A673 (cell line): ENCODE measurements at regions of chr9 and their contacts with region 1.

Region 1: DNA sequence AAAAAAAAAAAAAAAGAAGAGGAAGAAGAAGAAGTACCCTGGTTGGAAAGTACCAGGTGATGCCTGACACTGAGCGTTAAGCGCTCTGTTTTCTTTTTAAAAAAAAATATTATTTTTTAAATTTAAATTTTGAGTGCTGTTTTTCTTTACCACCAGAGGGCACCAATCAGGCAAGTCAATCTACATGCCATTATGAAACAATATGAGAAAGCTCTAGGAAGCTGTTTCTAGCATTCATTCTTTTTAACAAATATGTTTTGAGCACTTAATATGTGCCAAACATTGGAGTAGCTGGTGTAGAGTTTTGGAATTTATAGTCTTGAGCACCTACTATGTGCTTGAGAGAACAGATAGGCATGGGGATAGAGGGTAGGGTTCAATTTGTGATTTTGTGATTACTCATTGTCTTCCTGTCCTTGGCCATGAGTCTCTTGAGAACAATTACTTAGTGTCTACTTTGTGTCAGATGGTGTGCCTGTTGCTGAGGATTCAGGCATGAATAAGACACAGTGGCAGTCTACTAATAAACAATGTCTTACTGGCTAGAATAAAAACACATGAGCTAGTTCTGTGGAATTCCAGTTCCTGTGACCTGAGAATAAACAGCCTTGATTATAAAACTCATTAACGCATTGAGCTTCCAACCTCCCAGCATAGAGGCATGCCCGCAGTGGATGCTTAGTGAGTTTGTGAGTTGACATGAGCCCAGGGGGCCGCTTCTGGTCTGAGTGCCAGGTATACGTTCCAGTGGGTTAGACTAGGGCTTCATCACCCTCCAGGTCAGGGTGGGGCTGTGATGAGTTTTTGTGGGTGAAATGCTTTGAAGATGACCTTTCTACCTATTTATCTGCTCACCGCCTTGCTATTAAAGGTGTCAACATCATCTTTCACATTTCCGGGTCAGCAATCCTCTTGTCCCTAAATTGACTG is 3.0 kb upstream of the UBE2R2 start:
- DNase-seq: peak; percentile 69
- H3K4me3 ChIP-seq: no peak overlapping the region
- H3K27ac ChIP-seq: peak overlapping the region; percentile 14
- H3K4me1 ChIP-seq: peaks cover 15% of the 10 kb centered on the region
- H3K27me3 ChIP-seq: no peaks in the 10 kb centered on the region
- CTCF ChIP-seq: peak; percentile 70

Region 2: GRCh38 chr9:32886021-32886420 is 928.0 kb before region 1 on chr9:
- CTCF ChIA-PET with region 1: no interaction called
- POLR2A ChIA-PET with region 1: no interaction called
- intact Hi-C with region 1: no loop called
- DNase-seq: no peak
- H3K4me3 ChIP-seq: no peak overlapping the region
- H3K27ac ChIP-seq: no peak overlapping the region
- H3K4me1 ChIP-seq: no peaks in the 10 kb centered on the region
- H3K27me3 ChIP-seq: no peaks in the 10 kb centered on the region
- CTCF ChIP-seq: no peak

Region 3: GRCh38 chr9:33852216-33852826 is 38.3 kb after region 1 on chr9:
- CTCF ChIA-PET with region 1: interaction called, 19 read pairs
- POLR2A ChIA-PET with region 1: no interaction called
- intact Hi-C with region 1: no loop called
- DNase-seq: peak; percentile 38
- H3K4me3 ChIP-seq: no peak overlapping the region
- H3K27ac ChIP-seq: no peak overlapping the region
- H3K4me1 ChIP-seq: peaks cover 9% of the 10 kb centered on the region
- H3K27me3 ChIP-seq: no peaks in the 10 kb centered on the region
- CTCF ChIP-seq: peak; percentile 43